Ascending aorta (tissue), 2 donors: ENCODE measurements at regions of chr12 and their contacts with region 1.

Region 1: DNA sequence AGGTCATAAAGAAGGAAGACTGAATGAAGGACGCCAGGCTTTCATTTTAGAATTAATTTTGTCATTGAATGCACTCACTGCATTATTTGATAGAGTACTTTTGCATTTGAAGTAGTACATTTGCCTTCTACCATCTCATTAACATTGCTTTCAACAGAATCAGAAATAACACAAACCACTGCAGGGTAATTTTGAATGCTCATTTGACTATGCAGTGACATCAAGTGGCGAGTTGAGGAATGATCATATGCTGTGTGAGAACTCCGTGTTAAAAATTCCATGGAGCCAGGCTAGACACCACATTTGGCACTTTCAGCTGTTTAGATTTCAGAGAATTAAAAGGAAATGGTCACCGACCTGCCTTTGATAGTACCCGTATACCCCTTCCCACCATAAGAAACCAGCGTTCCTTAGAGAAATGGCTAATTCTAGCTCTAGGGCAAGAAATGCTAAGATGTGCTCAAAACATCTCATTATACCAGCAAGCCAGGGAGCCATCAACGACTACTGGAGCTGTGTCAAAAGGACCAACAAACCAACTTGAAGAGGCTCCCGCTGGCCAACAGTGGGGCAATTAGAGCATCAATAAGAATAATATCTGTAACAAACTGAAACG is 16.5 kb downstream of the HEBP1 start:
- DNase-seq: no peak
- H3K4me3 ChIP-seq: no peak overlapping the region
- H3K27ac ChIP-seq: no peak overlapping the region
- H3K4me1 ChIP-seq: peaks cover 0 to 18% of the 10 kb centered on the region in 2 donors
- H3K27me3 ChIP-seq: no peaks in the 10 kb centered on the region
- CTCF ChIP-seq: peak; percentile 49 to 72 (median 56)

Region 2: DNA sequence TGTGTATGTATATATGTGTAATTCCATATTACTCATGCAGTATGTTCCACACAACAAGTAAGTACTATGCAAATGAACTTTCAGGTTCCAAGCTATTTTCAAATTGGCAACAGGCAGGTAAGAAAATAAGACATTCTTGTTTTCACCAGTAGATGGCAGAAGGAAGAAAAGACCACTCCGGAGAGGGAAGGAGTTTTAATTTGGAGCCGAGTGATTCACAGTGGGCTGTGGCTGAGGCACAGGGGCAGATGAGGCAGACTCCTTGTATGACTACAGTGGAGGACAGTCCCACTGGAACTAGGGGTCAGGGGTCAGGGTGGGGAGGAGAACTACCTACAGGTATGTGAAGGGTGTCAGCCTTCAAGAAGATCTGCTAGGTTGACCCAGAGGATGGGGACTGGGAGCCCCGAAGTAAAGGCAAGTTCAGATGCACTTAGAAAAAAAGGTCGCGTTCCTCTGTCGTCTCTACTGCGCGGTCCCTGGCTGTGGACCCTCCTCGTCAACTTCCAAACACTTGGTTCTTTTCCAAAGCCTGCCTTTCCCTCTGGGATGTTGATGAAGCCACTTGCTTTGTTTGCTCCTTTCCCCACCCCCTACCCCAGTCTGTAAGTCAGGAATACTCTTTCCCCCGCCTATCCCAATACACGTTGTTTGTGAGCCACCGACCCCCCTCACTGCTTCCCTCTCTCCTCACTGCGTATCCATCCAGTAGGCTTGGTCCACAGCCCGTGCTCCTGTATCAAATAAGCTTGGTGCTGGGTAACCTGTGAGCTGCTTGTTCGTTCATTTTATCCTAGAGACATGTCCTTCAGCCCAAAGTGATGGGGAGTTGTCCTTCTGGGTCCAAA is 146.3 kb before region 1 on chr12:
- intact Hi-C with region 1: loop called (anchors 1 kb)
- DNase-seq: peak; percentile 16 to 83
- H3K4me3 ChIP-seq: no peak overlapping the region
- H3K27ac ChIP-seq: no peak overlapping the region
- H3K4me1 ChIP-seq: peaks cover 0 to 11% of the 10 kb centered on the region in 2 donors
- H3K27me3 ChIP-seq: no peaks in the 10 kb centered on the region
- CTCF ChIP-seq: peak; percentile 55 to 74 (median 72)

Region 3: GRCh38 chr12:12916135-12916944 is 67.2 kb before region 1 on chr12:
- intact Hi-C with region 1: loop called (anchors 1 kb)
- DNase-seq: peak; percentile 65 to 95
- H3K4me3 ChIP-seq: no peak overlapping the region
- H3K27ac ChIP-seq: peak overlapping the region; percentile 47 to 64
- H3K4me1 ChIP-seq: peaks cover 0 to 13% of the 10 kb centered on the region in 2 donors
- H3K27me3 ChIP-seq: no peaks in the 10 kb centered on the region
- CTCF ChIP-seq: peak; percentile 93 to 97 (median 96)